CD4-positive, alpha-beta memory T cell (primary cell): ENCODE measurements at regions of chr4 and their contacts with region 1.

Region 1: GRCh38 chr4:98995183-98996055 is at the start of gene METAP1:
- DNase-seq: peak; percentile 95 to 98 (median 97)
- H3K4me3 ChIP-seq: peak within 1 kb of the TSS; percentile 80 to 85
- H3K4me3 Mint-ChIP-seq: peak within 1 kb of the TSS; percentile 78 to 97 (median 91)
- H3K27ac ChIP-seq: peak within 1 kb of the TSS; percentile 81
- H3K27ac Mint-ChIP-seq: peak within 1 kb of the TSS; percentile 92 to 100 (median 99)
- H3K4me1 ChIP-seq: peaks cover 39% of the 10 kb centered on the region
- H3K4me1 Mint-ChIP-seq: peaks cover 23 to 47% (median 35%) of the 10 kb centered on the region in 4 donors
- H3K27me3 ChIP-seq: no peaks in the 10 kb centered on the region
- H3K27me3 Mint-ChIP-seq: no peaks in the 10 kb centered on the region
- total RNA-seq, gene METAP1: 36.4 to 36.7 TPM

Region 2: GRCh38 chr4:98260579-98261290 is 734.7 kb before region 1 on chr4:
- CTCF ChIA-PET with region 1: interaction called, 7 read pairs
- POLR2A ChIA-PET with region 1: interaction called, 10 read pairs
- intact Hi-C with region 1: loop called (anchors 1 kb)
- DNase-seq: peak in 4 of 5 donors; percentile 83 to 90 (median 84)
- H3K4me3 ChIP-seq: peak overlapping the region; percentile 70 to 82
- H3K4me3 Mint-ChIP-seq: peak overlapping the region; percentile 93 to 95 (median 94)
- H3K27ac ChIP-seq: peak overlapping the region; percentile 86
- H3K27ac Mint-ChIP-seq: peak overlapping the region; percentile 90 to 94 (median 93)
- H3K4me1 ChIP-seq: peaks cover 32% of the 10 kb centered on the region
- H3K4me1 Mint-ChIP-seq: peaks cover 37 to 60% (median 47%) of the 10 kb centered on the region in 4 donors
- H3K27me3 ChIP-seq: no peaks in the 10 kb centered on the region
- H3K27me3 Mint-ChIP-seq: no peaks in the 10 kb centered on the region

Region 3: DNA sequence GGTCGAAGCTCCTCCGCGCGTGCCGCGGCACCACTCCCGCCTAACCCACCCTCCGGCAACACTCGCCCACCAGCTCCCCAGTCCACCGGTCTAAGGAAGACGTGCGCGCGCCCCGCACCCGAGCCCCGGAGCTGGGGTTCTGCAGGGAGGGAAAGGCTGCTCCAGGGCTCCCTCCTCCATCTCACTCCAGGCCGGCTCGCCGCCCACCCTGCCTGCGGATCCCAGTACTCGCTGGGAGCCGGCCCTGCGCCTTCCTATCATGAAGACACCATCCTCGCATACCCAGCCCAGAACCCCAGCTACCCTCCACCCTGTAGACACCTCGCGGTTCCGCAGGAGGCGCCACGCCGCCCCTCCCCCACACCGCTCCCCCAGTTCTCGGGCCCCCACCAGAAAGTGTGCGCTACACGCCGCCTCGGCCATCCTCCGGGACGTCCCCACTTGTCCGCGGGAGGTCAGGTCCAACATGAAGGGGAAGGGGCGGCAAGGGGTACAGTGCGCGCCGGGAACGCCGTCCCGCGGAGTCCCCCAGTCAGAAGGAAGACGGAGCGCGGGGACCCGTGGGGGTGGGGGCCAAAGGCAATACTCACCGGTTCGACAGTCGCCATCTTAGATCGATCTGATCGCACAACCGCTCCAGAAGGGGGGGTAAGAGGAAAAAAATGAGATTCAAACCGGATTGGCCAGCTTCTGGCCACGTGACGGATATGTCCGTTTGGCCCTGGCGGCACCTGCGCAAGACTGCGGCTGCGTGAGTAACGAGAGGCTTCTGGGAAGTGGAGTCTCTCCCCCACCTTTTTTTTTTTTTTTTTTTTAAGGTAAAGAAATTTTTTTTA is 66.7 kb before region 1 on chr4 and contains the start of gene EIF4E:
- CTCF ChIA-PET with region 1: interaction called, 38 read pairs
- POLR2A ChIA-PET with region 1: interaction called, 57 read pairs
- intact Hi-C with region 1: loop called (anchors 1 kb)
- DNase-seq: peak; percentile 97 to 99 (median 98)
- H3K4me3 ChIP-seq: peak within 1 kb of the TSS; percentile 66 to 97
- H3K4me3 Mint-ChIP-seq: peak within 1 kb of the TSS; percentile 92 to 100 (median 98)
- H3K27ac ChIP-seq: peak within 1 kb of the TSS; percentile 82
- H3K27ac Mint-ChIP-seq: peak within 1 kb of the TSS; percentile 94 to 99 (median 98)
- H3K4me1 ChIP-seq: peaks cover 33% of the 10 kb centered on the region
- H3K4me1 Mint-ChIP-seq: peaks cover 17 to 58% (median 30%) of the 10 kb centered on the region in 4 donors
- H3K27me3 ChIP-seq: no peaks in the 10 kb centered on the region
- H3K27me3 Mint-ChIP-seq: peaks cover 0 to 2% of the 10 kb centered on the region in 2 donors
- total RNA-seq, gene EIF4E: 58.2 to 62.5 TPM

Region 4: DNA sequence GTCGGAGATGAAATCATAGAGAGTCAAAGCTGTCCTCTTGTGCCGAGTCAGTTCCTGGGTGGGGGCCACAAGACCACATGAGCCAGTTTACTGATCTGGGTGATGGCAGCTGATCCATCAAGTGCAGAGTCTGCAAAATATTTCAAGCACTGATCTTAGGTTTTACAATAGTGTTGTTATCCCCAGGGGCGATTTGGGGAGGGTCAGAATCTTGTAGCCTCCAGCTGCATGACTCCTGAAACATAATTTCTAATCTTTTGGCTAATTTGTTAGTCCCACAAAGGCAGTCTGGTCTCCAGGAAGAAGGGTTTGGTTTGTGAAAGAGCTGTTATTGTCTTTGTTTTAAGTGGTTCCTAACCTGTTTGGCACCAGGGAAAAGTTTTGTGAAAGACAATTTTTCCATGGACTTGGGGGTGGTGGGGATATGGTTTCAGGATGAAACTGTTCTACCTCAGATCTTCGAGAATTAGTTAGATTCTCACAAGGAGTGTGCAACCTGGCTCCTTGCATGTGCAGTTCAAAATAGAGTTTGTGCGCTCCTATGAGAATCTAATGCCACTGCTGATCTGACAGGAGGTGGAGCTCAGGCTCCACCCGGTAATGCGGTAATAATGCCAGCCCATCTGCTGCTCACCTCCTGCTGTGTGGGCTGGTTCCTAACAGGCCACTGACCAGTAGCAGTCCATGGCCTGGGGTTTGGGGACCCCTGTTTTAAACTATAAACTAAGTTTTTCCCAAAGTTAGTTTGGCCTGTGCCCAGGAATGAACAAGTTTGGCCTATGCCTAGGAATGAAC is 29.3 kb after region 1 on chr4:
- CTCF ChIA-PET with region 1: interaction called, 24 read pairs
- POLR2A ChIA-PET with region 1: interaction called, 7 read pairs
- intact Hi-C with region 1: no loop called
- DNase-seq: no peak
- H3K4me3 ChIP-seq: no peak overlapping the region
- H3K4me3 Mint-ChIP-seq: peak overlapping the region in 1 of 8 donors; percentile 27
- H3K27ac ChIP-seq: no peak overlapping the region
- H3K27ac Mint-ChIP-seq: peak overlapping the region in 6 of 7 donors; percentile 36 to 78 (median 54)
- H3K4me1 ChIP-seq: peaks cover 39% of the 10 kb centered on the region
- H3K4me1 Mint-ChIP-seq: peaks cover 46 to 81% (median 59%) of the 10 kb centered on the region in 4 donors
- H3K27me3 ChIP-seq: no peaks in the 10 kb centered on the region
- H3K27me3 Mint-ChIP-seq: no peaks in the 10 kb centered on the region

Region 5: DNA sequence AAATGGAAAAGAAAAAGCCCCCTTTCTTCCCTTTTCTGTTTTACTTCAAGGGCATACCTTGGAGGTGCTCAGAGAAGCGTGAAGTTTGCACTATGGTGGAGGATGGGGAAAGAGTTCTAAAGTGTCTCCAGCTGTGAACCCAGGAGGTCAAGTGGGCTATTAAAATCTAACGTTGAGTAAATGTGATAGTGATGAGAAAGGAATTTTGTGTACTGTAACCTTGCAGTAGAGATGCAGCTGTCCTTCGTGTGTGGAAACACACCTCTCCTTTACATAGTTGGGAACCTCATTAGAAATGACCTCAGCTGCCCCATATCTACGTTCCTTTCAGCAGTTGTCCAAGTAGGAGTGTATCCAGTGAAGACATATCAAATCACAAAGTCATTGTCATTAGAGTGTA is 66.7 kb after region 1 on chr4:
- CTCF ChIA-PET with region 1: interaction called, 373 read pairs
- POLR2A ChIA-PET with region 1: interaction called, 66 read pairs
- intact Hi-C with region 1: no loop called
- DNase-seq: no peak
- H3K4me3 ChIP-seq: no peak overlapping the region
- H3K4me3 Mint-ChIP-seq: no peak overlapping the region
- H3K27ac ChIP-seq: no peak overlapping the region
- H3K27ac Mint-ChIP-seq: peak overlapping the region in 1 of 7 donors; percentile 42
- H3K4me1 ChIP-seq: no peaks in the 10 kb centered on the region
- H3K4me1 Mint-ChIP-seq: no peaks in the 10 kb centered on the region
- H3K27me3 ChIP-seq: no peaks in the 10 kb centered on the region
- H3K27me3 Mint-ChIP-seq: no peaks in the 10 kb centered on the region

Region 6: GRCh38 chr4:99563310-99564186 is 568.1 kb after region 1 on chr4 and contains the start of gene TRMT10A:
- CTCF ChIA-PET with region 1: interaction called, 7 read pairs
- POLR2A ChIA-PET with region 1: interaction called, 8 read pairs
- intact Hi-C with region 1: loop called (anchors 1 kb)
- DNase-seq: peak; percentile 97 to 98 (median 98)
- H3K4me3 ChIP-seq: peak within 1 kb of the TSS; percentile 74 to 95
- H3K4me3 Mint-ChIP-seq: peak within 1 kb of the TSS; percentile 95 to 99 (median 98)
- H3K27ac ChIP-seq: peak within 1 kb of the TSS; percentile 93
- H3K27ac Mint-ChIP-seq: peak within 1 kb of the TSS; percentile 99 to 100 (median 100)
- H3K4me1 ChIP-seq: peaks cover 10% of the 10 kb centered on the region
- H3K4me1 Mint-ChIP-seq: peaks cover 13 to 24% (median 19%) of the 10 kb centered on the region in 4 donors
- H3K27me3 ChIP-seq: no peaks in the 10 kb centered on the region
- H3K27me3 Mint-ChIP-seq: peaks cover 7 to 14% of the 10 kb centered on the region in 2 donors
- total RNA-seq, gene TRMT10A: 5.4 to 5.7 TPM